Naive thymus-derived CD8-positive, alpha-beta T cell (primary cell): ENCODE measurements at regions of chr12 and their contacts with region 1.

Region 1: GRCh38 chr12:50211392-50212070 is 44.4 kb upstream of the CERS5 start:
- DNase-seq: peak in 1 of 10 donors; percentile 20
- ATAC-seq: peak; percentile 63 to 67
- H3K4me3 Mint-ChIP-seq: peak overlapping the region; percentile 40 to 81 (median 72)
- H3K27ac Mint-ChIP-seq: peak overlapping the region; percentile 87 to 97 (median 94)
- H3K4me1 Mint-ChIP-seq: peaks cover 13 to 54% (median 41%) of the 10 kb centered on the region in 4 donors
- H3K27me3 Mint-ChIP-seq: no peaks in the 10 kb centered on the region

Region 2: DNA sequence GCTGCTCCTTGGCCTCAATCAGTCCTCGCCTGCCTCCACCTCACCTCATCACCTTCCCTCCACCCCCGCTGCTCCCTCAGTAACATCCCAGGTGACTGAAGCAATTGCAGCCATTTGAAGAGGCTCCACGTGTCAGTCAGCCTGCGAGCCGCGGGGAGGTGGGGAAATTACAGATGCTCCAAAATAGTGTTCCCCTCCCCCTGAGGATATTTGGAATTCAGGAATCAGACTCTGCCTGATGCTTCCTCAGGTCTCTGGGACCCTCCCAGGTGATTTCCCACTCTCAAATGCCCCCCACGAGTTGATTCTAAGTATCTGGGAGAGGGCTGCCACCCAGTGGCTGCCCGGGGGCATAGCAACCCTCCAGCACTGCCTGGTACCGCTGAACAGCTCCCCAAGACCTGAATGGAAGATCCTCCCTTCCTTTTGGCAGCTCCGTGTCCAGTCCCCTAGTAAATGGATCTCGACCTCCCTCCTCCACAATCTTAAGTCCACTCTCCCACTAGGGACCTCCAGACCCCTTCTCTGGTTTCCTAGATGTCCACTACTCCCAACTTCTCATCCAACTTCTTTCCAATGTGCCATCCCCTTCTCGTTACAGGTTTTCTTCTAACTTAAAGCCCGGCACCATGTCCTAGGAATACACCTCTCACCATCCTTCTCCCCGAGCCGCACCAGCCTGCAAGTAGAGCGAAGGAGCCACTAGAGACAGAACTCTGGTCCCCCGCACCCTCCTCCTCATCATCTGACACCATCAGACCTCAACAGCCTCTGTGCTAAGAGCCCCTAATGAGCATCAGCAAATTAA is 155.5 kb before region 1 on chr12:
- POLR2A ChIA-PET with region 1: no interaction called
- DNase-seq: peak; percentile 29 to 78 (median 59)
- ATAC-seq: peak; percentile 24 to 43
- H3K4me3 Mint-ChIP-seq: peak overlapping the region; percentile 71 to 98 (median 90)
- H3K27ac Mint-ChIP-seq: peak overlapping the region in 5 of 10 donors; percentile 12 to 76 (median 63)
- H3K4me1 Mint-ChIP-seq: peaks cover 35 to 50% (median 47%) of the 10 kb centered on the region in 4 donors
- H3K27me3 Mint-ChIP-seq: peaks cover 11 to 38% (median 35%) of the 10 kb centered on the region in 5 donors

Region 3: DNA sequence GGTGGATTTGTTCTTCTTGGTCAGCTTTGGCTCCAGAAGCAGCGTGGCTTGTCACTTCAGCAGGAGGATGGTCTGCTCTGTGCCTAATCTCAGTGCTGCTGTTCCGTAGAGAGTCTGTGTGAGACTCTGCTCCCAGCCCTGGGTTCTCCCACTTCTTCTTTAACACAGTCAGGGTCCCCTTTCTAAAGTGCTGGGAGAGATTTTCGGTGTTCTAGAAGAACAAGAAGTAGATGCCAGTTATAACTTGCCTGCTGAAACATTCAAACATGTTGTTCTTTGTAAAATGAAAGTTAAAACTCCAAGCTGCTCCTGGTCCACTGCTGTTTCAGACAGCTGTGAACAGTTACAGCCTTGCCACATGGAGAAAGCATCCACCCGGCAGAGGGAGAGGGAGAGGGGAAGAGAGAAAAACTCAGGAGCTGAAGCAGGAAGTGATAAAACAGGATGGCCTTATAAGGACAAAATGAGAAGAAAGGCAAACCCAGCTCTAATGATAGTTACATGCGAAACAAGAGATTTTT is 10.8 kb after region 1 on chr12:
- POLR2A ChIA-PET with region 1: interaction called, 49 read pairs
- DNase-seq: peak in 4 of 10 donors; percentile 27 to 49 (median 40)
- ATAC-seq: peak; percentile 50 to 60
- H3K4me3 Mint-ChIP-seq: no peak overlapping the region
- H3K27ac Mint-ChIP-seq: no peak overlapping the region
- H3K4me1 Mint-ChIP-seq: peaks cover 11 to 45% (median 37%) of the 10 kb centered on the region in 4 donors
- H3K27me3 Mint-ChIP-seq: no peaks in the 10 kb centered on the region